ENCODE measurements at regions of chr14 and their contacts with region 1.

Region 1: GRCh38 chr14:51846631-51847488 is 13.6 kb upstream of the GNG2 start:
- DNase-seq: peak; percentile 82 to 97
- ATAC-seq: peak; percentile 68 to 90 (median 80)
- H3K4me3 ChIP-seq: peak overlapping the region; percentile 33
- H3K4me3 Mint-ChIP-seq: peak overlapping the region; percentile 89
- H3K27ac ChIP-seq: peak overlapping the region; percentile 98
- H3K27ac Mint-ChIP-seq: peak overlapping the region; percentile 97 to 98
- H3K4me1 ChIP-seq: peaks cover 61% of the 10 kb centered on the region
- H3K4me1 Mint-ChIP-seq: peaks cover 74 to 87% of the 10 kb centered on the region in 2 donors
- H3K27me3 ChIP-seq: no peaks in the 10 kb centered on the region
- H3K27me3 Mint-ChIP-seq: no peaks in the 10 kb centered on the region
- CTCF ChIP-seq: no peak

Region 2: DNA sequence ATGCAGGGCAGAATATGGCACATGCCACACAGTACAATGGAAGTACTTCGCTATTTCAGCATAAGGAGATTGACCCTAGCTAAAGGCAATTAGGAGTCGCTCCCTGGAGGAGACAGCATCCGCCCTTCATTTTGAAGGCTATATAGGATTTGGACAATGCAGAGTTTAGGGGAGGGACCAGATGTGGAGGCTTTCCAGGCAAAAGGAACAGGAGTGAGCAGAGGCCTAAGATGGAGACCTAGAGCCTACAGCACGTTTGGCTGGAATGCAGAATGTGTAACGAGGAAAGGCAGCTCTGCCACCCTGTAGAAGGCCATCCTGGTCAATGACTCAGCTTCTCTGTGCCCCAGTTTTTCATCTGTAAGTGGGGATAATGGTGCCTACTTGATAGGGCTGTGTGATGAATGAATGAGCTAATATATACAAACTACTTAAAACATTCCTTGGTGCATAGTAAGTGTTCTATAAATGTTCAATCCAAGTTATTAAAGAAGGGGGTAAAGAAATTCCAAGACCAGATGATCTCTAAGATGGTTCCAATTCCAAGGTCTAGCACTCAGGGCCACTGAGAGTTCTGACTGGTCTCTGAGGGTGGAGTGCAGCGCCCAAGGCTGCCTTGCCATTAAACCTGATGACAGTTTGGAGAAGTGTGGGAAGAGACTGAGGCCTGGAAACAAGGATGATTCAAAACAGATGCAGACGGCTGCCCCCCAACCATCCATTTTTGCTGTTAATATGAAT is 249.4 kb before region 1 on chr14:
- intact Hi-C with region 1: loop called (anchors 5 kb)
- DNase-seq: no peak
- ATAC-seq: no peak
- H3K4me3 ChIP-seq: no peak overlapping the region
- H3K4me3 Mint-ChIP-seq: no peak overlapping the region
- H3K27ac ChIP-seq: no peak overlapping the region
- H3K27ac Mint-ChIP-seq: peak overlapping the region; percentile 28 to 76
- H3K4me1 ChIP-seq: peaks cover 18% of the 10 kb centered on the region
- H3K4me1 Mint-ChIP-seq: peaks cover 32 to 64% of the 10 kb centered on the region in 2 donors
- H3K27me3 ChIP-seq: peaks cover 6% of the 10 kb centered on the region
- H3K27me3 Mint-ChIP-seq: peaks cover 18 to 41% of the 10 kb centered on the region in 2 donors
- CTCF ChIP-seq: no peak

Region 3: GRCh38 chr14:51860164-51860824 is 13.4 kb after region 1 on chr14 and contains the start of gene GNG2:
- intact Hi-C with region 1: loop called (anchors 1 kb)
- DNase-seq: peak; percentile 76 to 93
- ATAC-seq: peak; percentile 77 to 96 (median 91)
- H3K4me3 ChIP-seq: peak within 1 kb of the TSS; percentile 73
- H3K4me3 Mint-ChIP-seq: peak within 1 kb of the TSS; percentile 91
- H3K27ac ChIP-seq: peak within 1 kb of the TSS; percentile 82
- H3K27ac Mint-ChIP-seq: no peak within 1 kb of the TSS
- H3K4me1 ChIP-seq: peaks cover 28% of the 10 kb centered on the region
- H3K4me1 Mint-ChIP-seq: peaks cover 67 to 71% of the 10 kb centered on the region in 2 donors
- H3K27me3 ChIP-seq: no peaks in the 10 kb centered on the region
- H3K27me3 Mint-ChIP-seq: no peaks in the 10 kb centered on the region
- CTCF ChIP-seq: no peak
- total RNA-seq, gene GNG2: 552 to 653 (median 582) TPM

Region 4: GRCh38 chr14:51884086-51884927 is 37.4 kb after region 1 on chr14:
- intact Hi-C with region 1: loop called (anchors 5 kb)
- DNase-seq: peak in 1 of 2 donors; percentile 37
- ATAC-seq: peak; percentile 69 to 87 (median 75)
- H3K4me3 ChIP-seq: no peak overlapping the region
- H3K4me3 Mint-ChIP-seq: peak overlapping the region; percentile 86
- H3K27ac ChIP-seq: peak overlapping the region; percentile 76
- H3K27ac Mint-ChIP-seq: peak overlapping the region; percentile 94 to 99
- H3K4me1 ChIP-seq: peaks cover 30% of the 10 kb centered on the region
- H3K4me1 Mint-ChIP-seq: peaks cover 82 to 87% of the 10 kb centered on the region in 2 donors
- H3K27me3 ChIP-seq: no peaks in the 10 kb centered on the region
- H3K27me3 Mint-ChIP-seq: no peaks in the 10 kb centered on the region
- CTCF ChIP-seq: no peak

Region 5: GRCh38 chr14:51929906-51930682 is 83.2 kb after region 1 on chr14:
- intact Hi-C with region 1: loop called (anchors 1 kb)
- DNase-seq: peak in 1 of 2 donors; percentile 32
- ATAC-seq: peak; percentile 62 to 76 (median 68)
- H3K4me3 ChIP-seq: no peak overlapping the region
- H3K4me3 Mint-ChIP-seq: peak overlapping the region; percentile 86
- H3K27ac ChIP-seq: peak overlapping the region; percentile 63
- H3K27ac Mint-ChIP-seq: peak overlapping the region; percentile 93 to 94
- H3K4me1 ChIP-seq: peaks cover 57% of the 10 kb centered on the region
- H3K4me1 Mint-ChIP-seq: peaks cover 75 to 78% of the 10 kb centered on the region in 2 donors
- H3K27me3 ChIP-seq: no peaks in the 10 kb centered on the region
- H3K27me3 Mint-ChIP-seq: no peaks in the 10 kb centered on the region
- CTCF ChIP-seq: no peak

Region 6: GRCh38 chr14:52015411-52016030 is 168.7 kb after region 1 on chr14:
- intact Hi-C with region 1: no loop called
- DNase-seq: no peak
- ATAC-seq: no peak
- H3K4me3 ChIP-seq: no peak overlapping the region
- H3K4me3 Mint-ChIP-seq: no peak overlapping the region
- H3K27ac ChIP-seq: no peak overlapping the region
- H3K27ac Mint-ChIP-seq: no peak overlapping the region
- H3K4me1 ChIP-seq: no peaks in the 10 kb centered on the region
- H3K4me1 Mint-ChIP-seq: no peaks in the 10 kb centered on the region
- H3K27me3 ChIP-seq: no peaks in the 10 kb centered on the region
- H3K27me3 Mint-ChIP-seq: peaks cover 8 to 11% of the 10 kb centered on the region in 2 donors
- CTCF ChIP-seq: no peak

Region 7: DNA sequence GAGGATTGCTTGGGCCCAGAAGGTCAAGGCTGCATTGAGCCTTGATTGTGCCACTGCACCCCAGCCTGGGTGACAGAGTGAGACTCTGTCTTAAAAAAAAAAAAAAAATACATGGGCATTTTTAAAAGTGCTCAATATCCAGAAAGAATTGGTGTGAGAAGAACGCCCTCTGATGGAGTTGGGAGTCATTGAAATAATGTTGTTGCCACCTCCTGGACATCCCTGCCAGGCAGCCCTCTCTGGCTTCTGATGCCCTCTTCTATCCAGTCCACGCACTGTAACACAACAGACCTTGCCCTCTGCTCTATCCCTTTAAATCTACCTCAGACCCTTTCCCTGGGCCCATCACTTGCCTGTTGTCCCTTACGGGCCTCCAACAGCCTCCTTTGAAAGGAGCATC is 425.5 kb after region 1 on chr14:
- intact Hi-C with region 1: loop called (anchors 5 kb)
- DNase-seq: peak in 1 of 2 donors; percentile 73
- ATAC-seq: peak; percentile 46 to 64 (median 55)
- H3K4me3 ChIP-seq: peak overlapping the region; percentile 89
- H3K4me3 Mint-ChIP-seq: peak overlapping the region; percentile 99
- H3K27ac ChIP-seq: peak overlapping the region; percentile 71
- H3K27ac Mint-ChIP-seq: peak overlapping the region; percentile 95 to 100
- H3K4me1 ChIP-seq: peaks cover 26% of the 10 kb centered on the region
- H3K4me1 Mint-ChIP-seq: peaks cover 66 to 82% of the 10 kb centered on the region in 2 donors
- H3K27me3 ChIP-seq: no peaks in the 10 kb centered on the region
- H3K27me3 Mint-ChIP-seq: no peaks in the 10 kb centered on the region
- CTCF ChIP-seq: peak; percentile 70

Measured in natural killer cell (primary cell).